ENCODE measurements at regions of chr10 and their contacts with region 1.

Region 1: DNA sequence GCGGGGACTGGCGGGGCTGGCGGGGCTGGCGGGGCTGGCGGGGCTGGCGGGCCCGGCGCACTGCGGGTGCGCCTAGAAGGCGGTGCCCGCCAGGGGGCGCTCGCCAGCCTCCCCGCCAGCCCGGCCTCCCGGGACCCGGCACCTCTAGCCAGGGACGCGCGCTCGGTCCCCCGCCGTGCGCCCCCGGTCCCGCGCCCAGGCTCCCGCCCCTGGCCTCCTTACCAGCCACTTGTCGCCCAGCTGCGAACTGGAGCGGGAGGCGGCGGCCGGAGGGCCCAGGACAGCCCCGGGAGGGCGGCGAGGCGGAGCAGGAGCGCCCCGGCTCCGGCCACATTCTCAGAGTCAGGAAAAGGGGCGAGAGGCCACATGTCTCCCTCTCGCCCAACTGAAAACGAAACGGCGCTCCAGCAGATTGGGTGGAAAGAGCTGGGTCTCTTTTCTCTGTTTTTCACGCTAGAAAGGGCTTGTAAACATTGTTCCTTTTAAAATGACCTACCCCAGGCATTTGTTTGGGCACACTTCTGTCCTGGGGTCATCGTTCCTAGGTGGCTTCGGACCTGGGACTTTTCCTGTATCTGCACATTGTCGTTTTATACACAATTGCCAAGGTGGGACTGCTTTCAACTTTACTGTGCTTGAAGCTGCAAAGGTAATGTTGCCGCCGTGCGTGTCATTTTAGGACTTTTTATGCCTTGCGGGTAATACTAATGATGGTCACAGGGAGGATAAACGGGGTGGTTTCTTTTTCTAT is 378 bp upstream of the PRKCQ start:
- DNase-seq: peak; percentile 96
- H3K4me3 Mint-ChIP-seq: peak overlapping the region; percentile 97
- H3K27ac Mint-ChIP-seq: peak overlapping the region; percentile 88
- H3K4me1 Mint-ChIP-seq: peaks cover 60% of the 10 kb centered on the region
- H3K27me3 Mint-ChIP-seq: no peaks in the 10 kb centered on the region

Region 2: DNA sequence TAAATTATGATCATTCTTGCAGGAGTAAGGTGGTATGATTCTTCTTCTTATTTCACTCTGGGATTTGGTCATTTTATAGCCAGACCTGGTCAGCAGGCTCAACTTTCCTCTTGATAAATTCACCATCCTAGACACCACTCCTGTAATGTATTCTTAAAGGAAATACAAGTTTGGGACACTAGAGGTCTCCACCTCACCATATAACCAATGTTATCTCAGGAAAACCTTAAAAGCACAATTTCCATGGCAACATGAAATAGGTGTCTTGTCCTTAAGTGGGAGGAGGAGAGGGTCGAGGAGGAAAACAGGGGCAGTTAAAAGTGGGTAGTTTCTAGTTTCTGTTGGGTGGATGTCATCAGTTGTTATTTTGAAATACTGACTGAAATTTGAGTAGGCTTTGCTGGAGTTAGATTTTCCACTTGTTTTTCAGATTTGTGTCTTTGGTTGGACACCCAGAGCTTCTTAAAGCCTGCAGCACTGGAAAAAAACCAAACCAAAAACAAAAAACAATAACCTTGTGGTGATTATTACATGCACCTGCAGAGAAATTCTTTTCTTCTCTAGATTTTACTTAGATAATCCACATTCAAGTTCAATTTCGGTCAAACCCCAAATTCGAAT is 163.5 kb before region 1 on chr10:
- intact Hi-C with region 1: loop called (anchors 1 kb)
- DNase-seq: peak; percentile 79
- H3K4me3 Mint-ChIP-seq: no peak overlapping the region
- H3K27ac Mint-ChIP-seq: no peak overlapping the region
- H3K4me1 Mint-ChIP-seq: peaks cover 7% of the 10 kb centered on the region
- H3K27me3 Mint-ChIP-seq: no peaks in the 10 kb centered on the region

Region 3: DNA sequence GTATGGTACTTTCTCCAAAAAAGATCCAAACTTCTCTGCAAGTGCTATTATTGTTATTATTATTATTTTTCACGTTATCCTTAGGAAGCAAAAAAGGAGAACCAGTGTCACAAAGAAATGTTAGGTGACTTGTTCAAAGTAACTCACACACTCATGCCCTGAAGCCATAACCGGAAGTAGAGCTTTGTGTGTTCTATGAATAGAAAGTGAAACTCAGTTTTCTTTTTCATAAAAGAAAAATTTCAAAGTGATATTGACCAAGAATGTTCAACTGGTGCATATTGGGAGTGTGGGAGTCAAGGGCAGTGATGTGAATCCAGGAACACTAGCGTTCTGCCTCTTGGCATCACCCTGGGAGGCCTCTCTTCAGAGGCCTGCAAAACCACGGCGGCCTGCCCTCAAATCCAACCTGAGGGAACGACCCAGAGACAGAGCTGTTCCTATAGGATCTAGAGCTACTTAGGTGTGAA is 106.5 kb before region 1 on chr10:
- intact Hi-C with region 1: loop called (anchors 1 kb)
- DNase-seq: peak; percentile 82
- H3K4me3 Mint-ChIP-seq: peak overlapping the region; percentile 85
- H3K27ac Mint-ChIP-seq: peak overlapping the region; percentile 96
- H3K4me1 Mint-ChIP-seq: peaks cover 54% of the 10 kb centered on the region
- H3K27me3 Mint-ChIP-seq: no peaks in the 10 kb centered on the region

Region 4: DNA sequence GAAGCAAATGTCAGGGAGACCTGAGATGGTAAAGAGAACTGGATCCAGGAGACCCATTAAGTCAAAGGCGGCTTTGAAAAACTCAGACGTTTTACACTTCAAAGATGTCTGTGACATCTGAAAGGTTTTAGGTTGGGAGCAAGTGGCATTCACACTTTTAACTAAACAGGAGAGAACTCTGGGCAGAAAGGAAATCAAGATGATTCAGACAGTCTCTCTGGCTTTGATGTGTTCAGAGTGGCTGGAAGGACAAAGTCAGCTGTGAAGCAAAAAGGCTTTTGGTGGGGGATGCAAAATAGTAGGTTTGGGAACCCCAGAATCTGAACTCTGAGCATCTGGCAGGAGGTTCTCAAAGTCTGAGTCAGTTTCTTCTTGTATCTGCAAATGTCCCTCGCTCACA is 67.0 kb before region 1 on chr10:
- intact Hi-C with region 1: loop called (anchors 2 kb)
- DNase-seq: peak; percentile 78
- H3K4me3 Mint-ChIP-seq: peak overlapping the region; percentile 75
- H3K27ac Mint-ChIP-seq: peak overlapping the region; percentile 91
- H3K4me1 Mint-ChIP-seq: peaks cover 61% of the 10 kb centered on the region
- H3K27me3 Mint-ChIP-seq: no peaks in the 10 kb centered on the region

Region 5: DNA sequence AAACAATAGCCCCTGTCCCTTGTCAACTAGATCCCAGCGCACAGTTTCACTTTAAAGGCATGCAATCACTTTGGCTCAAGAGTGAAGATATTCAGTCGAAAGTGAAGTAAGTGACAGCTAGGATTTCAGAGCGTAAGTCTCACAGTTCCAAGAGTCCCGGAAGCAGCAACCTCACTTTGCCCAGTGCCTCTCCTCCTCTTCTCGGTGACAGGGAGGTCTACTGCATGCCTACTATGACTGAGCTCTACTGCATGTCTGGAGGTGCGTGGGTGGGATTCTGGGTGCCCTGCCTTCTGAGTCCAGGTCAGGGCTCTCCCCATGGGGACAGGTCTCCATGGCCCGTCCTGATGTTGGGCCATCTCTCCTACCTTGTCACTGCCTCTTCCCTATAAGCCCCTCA is 17.4 kb before region 1 on chr10:
- intact Hi-C with region 1: loop called (anchors 1 kb)
- DNase-seq: peak; percentile 85
- H3K4me3 Mint-ChIP-seq: peak overlapping the region; percentile 77
- H3K27ac Mint-ChIP-seq: peak overlapping the region; percentile 82
- H3K4me1 Mint-ChIP-seq: peaks cover 83% of the 10 kb centered on the region
- H3K27me3 Mint-ChIP-seq: no peaks in the 10 kb centered on the region

Region 6: GRCh38 chr10:6607778-6608177 is 27.3 kb after region 1 on chr10:
- intact Hi-C with region 1: loop called (anchors 1 kb)
- DNase-seq: no peak
- H3K4me3 Mint-ChIP-seq: no peak overlapping the region
- H3K27ac Mint-ChIP-seq: peak overlapping the region; percentile 91
- H3K4me1 Mint-ChIP-seq: peaks cover 61% of the 10 kb centered on the region
- H3K27me3 Mint-ChIP-seq: no peaks in the 10 kb centered on the region

Region 7: DNA sequence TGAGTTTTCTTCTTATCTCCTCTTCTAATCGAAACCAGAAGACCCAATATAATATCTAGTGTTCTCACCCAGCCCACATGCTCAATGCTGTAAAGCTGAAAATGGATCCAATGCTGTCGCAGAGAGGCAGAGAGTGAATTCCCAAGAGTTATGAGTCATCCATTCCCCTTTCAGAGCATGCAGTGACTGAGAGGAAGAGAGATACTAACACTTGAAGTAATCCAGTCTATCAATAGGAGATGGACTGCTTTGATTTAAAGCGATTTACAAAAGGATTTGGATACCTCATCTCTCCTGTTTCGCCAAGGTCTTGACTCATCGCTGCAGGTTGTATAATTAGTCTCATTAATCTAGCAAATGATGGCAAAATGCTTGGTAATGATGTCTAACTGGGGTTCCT is 41.1 kb after region 1 on chr10:
- intact Hi-C with region 1: no loop called
- DNase-seq: no peak
- H3K4me3 Mint-ChIP-seq: no peak overlapping the region
- H3K27ac Mint-ChIP-seq: peak overlapping the region; percentile 43
- H3K4me1 Mint-ChIP-seq: peaks cover 26% of the 10 kb centered on the region
- H3K27me3 Mint-ChIP-seq: no peaks in the 10 kb centered on the region

Region 8: GRCh38 chr10:6667679-6668270 is 87.3 kb after region 1 on chr10:
- intact Hi-C with region 1: loop called (anchors 1 kb)
- DNase-seq: peak; percentile 83
- H3K4me3 Mint-ChIP-seq: no peak overlapping the region
- H3K27ac Mint-ChIP-seq: peak overlapping the region; percentile 31
- H3K4me1 Mint-ChIP-seq: peaks cover 22% of the 10 kb centered on the region
- H3K27me3 Mint-ChIP-seq: peaks cover 11% of the 10 kb centered on the region